ENCODE measurements at regions of chr11 and their contacts with region 1.

Region 1: GRCh38 chr11:10653926-10654810 is 39.4 kb downstream of the IRAG1 start:
- DNase-seq: peak; percentile 70
- CTCF ChIP-seq: peak; percentile 54

Region 2: DNA sequence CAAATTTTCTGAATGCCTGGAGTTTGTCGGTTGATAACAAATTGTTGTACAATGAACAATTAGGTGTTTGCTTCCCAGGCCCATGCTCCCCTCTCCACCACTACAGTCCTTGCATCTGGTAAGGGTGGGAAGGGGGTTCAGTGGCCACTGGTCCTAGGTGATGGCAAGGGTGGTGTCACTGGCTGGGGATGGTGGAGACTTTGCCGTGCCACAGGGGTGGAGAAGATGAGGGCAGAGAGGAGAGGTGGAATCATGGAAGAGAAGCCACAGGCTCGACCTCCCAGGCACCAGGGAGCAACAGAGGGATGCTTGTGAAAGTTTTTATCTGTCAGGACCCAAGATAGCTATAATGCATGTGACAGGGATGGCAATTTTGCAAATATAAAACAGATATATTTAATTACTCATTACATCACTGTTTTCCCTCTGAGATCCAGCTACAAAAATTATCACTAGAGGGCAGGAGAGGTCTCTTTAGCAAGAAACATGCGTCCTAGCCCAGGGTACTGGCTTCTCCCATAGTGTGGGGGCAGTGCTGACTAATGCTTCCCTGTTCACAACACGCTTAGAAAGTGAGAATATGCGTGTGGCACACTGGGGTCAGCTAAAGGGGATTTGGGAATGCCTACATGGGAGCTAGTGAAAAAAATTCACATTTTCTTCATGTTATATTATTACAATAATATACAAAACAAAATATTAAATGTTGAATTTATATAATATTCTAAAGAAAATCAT is 248.1 kb before region 1 on chr11:
- CTCF ChIA-PET with region 1: interaction called, 17 read pairs
- POLR2A ChIA-PET with region 1: no interaction called
- DNase-seq: peak; percentile 63
- CTCF ChIP-seq: peak; percentile 56

Region 3: GRCh38 chr11:10519630-10520029 is 134.5 kb before region 1 on chr11:
- CTCF ChIA-PET with region 1: interaction called, 10 read pairs
- POLR2A ChIA-PET with region 1: no interaction called
- DNase-seq: no peak
- CTCF ChIP-seq: no peak

Region 4: GRCh38 chr11:10573556-10573955 is 80.6 kb before region 1 on chr11:
- CTCF ChIA-PET with region 1: no interaction called
- POLR2A ChIA-PET with region 1: no interaction called
- DNase-seq: no peak
- CTCF ChIP-seq: no peak

Region 5: GRCh38 chr11:10609636-10610035 is 44.5 kb before region 1 on chr11:
- CTCF ChIA-PET with region 1: interaction called, 11 read pairs
- POLR2A ChIA-PET with region 1: no interaction called
- DNase-seq: no peak
- CTCF ChIP-seq: no peak

Region 6: GRCh38 chr11:10641177-10641911 is 12.8 kb before region 1 on chr11:
- CTCF ChIA-PET with region 1: interaction called, 71 read pairs
- POLR2A ChIA-PET with region 1: no interaction called
- DNase-seq: peak; percentile 74
- CTCF ChIP-seq: no peak

Region 7: DNA sequence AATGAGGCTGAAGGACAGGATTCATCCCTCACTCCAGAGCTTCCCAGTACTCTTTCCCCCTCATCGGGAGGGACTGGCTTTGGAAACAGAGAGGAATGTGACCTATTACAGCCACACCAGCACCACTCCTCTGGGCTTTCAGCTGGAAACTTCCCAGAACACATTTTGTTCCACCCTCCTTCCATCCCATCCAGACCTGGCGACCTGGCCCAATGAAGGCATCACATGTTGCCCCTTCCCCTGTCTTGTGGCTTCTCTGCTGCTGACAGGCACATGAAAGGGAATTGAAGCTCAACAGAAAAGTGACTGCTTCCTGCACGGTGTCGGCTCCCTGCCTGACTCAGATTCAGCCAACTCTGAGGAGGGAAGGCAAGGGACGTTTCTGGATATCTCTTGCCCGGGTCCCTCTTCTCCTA is 20.3 kb after region 1 on chr11:
- CTCF ChIA-PET with region 1: interaction called, 13 read pairs
- POLR2A ChIA-PET with region 1: no interaction called
- DNase-seq: no peak
- CTCF ChIP-seq: no peak

Measured in GM10248 (cell line).